Right ventricle myocardium superior (tissue), 1 donor: ENCODE measurements at regions of chr6 and their contacts with region 1.

Region 1: DNA sequence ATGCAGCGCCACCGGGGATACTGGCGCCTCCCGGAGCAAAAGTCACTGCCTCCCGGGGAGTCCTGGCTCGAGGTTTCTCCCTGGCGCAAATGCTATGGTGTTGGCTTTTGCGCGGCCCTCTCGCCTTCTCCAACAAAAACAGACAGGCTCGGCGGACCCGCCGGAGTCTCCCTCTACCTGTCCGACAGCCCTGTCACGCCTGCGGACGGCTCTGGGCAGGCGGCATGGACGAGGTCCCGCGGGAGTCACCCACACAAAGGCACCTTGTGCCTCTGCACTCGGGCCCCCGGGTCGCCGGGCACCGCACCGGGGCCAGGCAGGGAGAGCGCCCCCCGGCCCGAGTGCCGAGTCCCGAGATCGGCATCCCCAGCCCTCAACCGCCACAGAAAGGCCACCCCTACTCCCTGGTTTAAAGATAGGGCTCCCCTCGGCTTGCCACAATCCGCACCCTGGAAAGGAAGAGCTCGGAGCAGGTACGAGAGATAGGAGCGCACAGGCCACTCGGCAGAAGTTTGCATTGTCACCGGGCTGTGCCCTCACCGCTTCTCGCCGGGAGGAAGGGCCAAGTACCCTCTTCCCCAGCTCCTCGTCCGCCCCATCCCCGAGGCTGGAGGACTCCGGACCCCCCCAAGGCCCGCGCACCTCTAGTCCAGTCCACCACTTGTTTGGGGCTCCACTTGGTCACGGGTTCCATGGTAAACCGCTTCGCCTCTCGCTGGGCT is 903 bp downstream of the CNKSR3 start:
- DNase-seq: peak; percentile 56
- ATAC-seq: peak; percentile 45

Region 2: GRCh38 chr6:154410619-154411072 is 98.9 kb before region 1 on chr6:
- intact Hi-C with region 1: loop called (anchors 10 kb)
- DNase-seq: no peak
- ATAC-seq: peak; percentile 93

Region 3: DNA sequence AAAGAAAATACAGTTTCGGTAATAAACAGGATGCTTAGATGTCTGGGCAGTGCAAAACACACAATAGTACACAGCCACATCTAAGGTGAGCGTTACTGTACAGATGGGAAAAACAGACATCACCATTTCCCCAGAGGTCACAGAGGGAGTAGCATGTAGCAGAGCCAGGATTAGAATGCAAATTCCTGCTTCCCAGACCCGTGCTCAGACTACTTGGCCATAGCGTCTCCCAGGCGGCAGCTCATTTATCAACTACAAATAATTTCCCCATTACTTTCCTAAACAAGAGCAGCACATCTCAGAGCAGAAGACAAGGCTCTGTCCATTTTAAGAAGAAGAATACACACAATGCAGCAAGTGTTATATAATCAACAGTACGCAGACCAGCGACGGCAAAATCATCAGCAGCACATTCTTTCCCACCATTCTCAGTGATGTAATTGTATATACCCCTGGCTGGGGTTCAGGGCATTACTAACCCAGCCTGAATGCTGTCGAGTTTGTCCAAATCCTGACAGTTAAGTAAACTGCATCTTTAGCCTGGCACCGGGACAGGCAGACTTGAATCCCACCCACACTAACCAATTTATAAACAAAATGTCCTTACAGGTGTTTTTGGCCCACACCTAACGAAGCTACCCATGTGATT is 61.0 kb before region 1 on chr6:
- intact Hi-C with region 1: loop called (anchors 10 kb)
- DNase-seq: no peak
- ATAC-seq: peak; percentile 81

Region 4: DNA sequence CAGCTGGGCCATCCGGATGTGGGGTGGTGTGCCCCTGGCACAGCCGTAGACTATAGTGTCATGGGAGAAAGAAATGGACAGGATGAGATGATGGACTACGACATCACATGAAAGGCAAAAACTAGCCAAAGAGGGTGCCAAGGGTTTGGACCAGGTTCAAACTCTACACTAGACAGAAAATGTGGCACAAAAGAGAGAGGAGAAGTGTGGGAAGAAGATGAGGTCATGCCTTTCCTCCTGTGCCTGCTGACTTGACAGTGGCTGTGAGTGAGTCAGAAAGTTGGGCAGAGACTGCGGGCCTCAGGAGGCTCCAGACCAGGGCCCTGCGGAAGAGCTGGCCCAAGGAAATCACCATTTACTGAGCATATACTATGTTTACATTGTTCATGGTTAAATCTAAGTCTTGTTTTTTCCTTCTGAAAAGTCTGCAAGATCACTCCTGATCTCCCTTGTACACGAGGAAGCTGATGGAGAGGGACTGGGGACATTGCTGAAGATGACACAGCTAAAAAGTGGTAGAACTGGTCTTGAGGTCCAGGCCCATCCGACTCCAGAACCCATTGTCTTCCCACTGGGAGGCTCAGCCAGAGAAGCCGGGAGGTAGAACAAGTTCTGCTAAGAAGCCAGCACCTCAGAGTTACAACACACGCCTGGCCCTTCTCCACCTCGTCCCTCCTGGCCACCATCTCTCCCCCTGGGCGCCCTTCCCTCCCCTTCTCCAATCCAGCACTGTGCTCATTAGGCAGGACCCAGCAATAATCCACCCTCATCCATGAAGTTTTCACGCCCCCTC is 34.8 kb before region 1 on chr6:
- intact Hi-C with region 1: no loop called
- DNase-seq: no peak
- ATAC-seq: no peak

Region 5: GRCh38 chr6:154703084-154703483 is 193.5 kb after region 1 on chr6:
- intact Hi-C with region 1: no loop called
- DNase-seq: no peak
- ATAC-seq: no peak